HCT116 (cell line): ENCODE measurements at regions of chr19 and their contacts with region 1.

Region 1: DNA sequence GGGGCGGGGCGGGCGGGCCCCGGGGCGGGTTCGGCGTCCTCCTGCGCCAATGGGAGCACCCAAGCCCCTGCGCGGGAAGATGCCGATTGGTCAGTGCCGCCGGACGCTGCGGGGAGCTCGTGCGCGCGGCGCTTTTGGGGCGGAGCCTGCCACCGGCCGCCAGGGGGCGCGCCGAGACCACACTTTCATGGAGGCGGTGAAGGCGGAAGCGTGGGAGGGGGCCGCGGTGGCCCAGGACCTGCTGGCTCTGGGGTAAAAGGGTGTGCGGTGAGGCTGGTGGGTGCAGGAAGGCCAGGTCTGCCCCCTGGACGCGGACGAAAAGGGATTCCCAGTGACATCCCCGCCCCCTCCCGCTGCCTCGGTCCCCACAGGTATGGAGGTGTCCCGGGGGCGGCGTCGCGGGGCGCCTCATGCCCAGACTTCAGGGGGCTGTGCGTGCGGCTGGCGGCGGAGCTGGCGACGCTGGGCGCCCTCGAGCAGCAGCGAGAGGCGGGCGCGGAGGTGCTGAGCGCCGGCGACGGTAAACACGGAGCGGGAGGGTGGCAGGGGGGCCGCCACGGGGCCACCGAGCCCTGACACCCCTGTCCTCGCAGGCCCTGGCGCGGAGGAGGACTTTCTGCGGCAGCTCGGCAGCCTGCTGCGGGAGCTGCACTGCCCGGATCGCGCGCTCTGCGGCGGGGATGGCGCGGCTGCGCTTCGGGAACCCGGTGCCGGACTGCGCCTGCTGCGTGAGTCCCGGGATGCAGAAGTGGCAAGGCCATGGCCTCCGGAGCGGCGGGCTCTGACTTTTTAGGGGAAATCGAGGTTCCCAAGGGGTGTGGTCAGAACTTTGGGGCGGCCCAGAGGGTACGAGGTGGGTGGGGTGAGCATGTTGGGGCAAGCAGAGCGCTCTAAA is at the start of gene FAM98C:
- DNase-seq: peak; percentile 92
- ATAC-seq: peak; percentile 98
- H3K4me3 ChIP-seq: peak within 1 kb of the TSS; percentile 82 to 91
- H3K27ac ChIP-seq: peak within 1 kb of the TSS; percentile 95
- H3K4me1 ChIP-seq: peaks cover 8 to 17% of the 10 kb centered on the region in 2 experiments; a peak in 3 of 4 replicates
- H3K27me3 ChIP-seq: no peaks in the 10 kb centered on the region
- CTCF ChIP-seq: peak; percentile 85 to 90 (median 89)
- POLR2A ChIP-seq: no peak
- RAD21 ChIP-seq: peak; percentile 94
- total RNA-seq, gene FAM98C: 33.8 TPM

Region 2: GRCh38 chr19:38115271-38115802 is 287.9 kb before region 1 on chr19:
- CTCF ChIA-PET with region 1: no interaction called
- POLR2A ChIA-PET with region 1: no interaction called
- RAD21 ChIA-PET with region 1: no interaction called
- intact Hi-C with region 1: no loop called
- DNase-seq: no peak
- ATAC-seq: no peak
- H3K4me3 ChIP-seq: no peak overlapping the region
- H3K27ac ChIP-seq: no peak overlapping the region
- H3K4me1 ChIP-seq: no peaks in the 10 kb centered on the region
- H3K27me3 ChIP-seq: no peaks in the 10 kb centered on the region
- CTCF ChIP-seq: no peak
- POLR2A ChIP-seq: no peak
- RAD21 ChIP-seq: no peak

Region 3: GRCh38 chr19:38374429-38375176 is 28.6 kb before region 1 on chr19 and contains the start of gene PSMD8:
- CTCF ChIA-PET with region 1: interaction called, 9 read pairs
- POLR2A ChIA-PET with region 1: interaction called, 12 read pairs
- RAD21 ChIA-PET with region 1: no interaction called
- intact Hi-C with region 1: no loop called
- DNase-seq: peak; percentile 99
- ATAC-seq: peak; percentile 98
- H3K4me3 ChIP-seq: peak within 1 kb of the TSS; percentile 97 to 98
- H3K27ac ChIP-seq: peak within 1 kb of the TSS; percentile 92
- H3K4me1 ChIP-seq: peaks cover 11 to 23% of the 10 kb centered on the region in 2 experiments
- H3K27me3 ChIP-seq: no peaks in the 10 kb centered on the region
- CTCF ChIP-seq: no peak
- POLR2A ChIP-seq: peak; percentile 92
- RAD21 ChIP-seq: peak; percentile 2; the same call in 1 of the 2 replicates
- total RNA-seq, gene PSMD8: 195 TPM

Region 4: GRCh38 chr19:38417544-38418506 is 14.6 kb after region 1 on chr19:
- CTCF ChIA-PET with region 1: interaction called, 13 read pairs
- POLR2A ChIA-PET with region 1: interaction called, 4 read pairs
- RAD21 ChIA-PET with region 1: interaction called in 1 of 2 experiments, 4 read pairs
- intact Hi-C with region 1: no loop called
- DNase-seq: peak; percentile 66
- ATAC-seq: peak; percentile 93
- H3K4me3 ChIP-seq: peak overlapping the region; percentile 36 to 57
- H3K27ac ChIP-seq: peak overlapping the region; percentile 21
- H3K4me1 ChIP-seq: peaks cover 14 to 16% of the 10 kb centered on the region in 2 experiments; a peak in 3 of 4 replicates
- H3K27me3 ChIP-seq: no peaks in the 10 kb centered on the region
- CTCF ChIP-seq: 0 out of 6 replicates have a peak, but pooled peaks of 1 of the 3 experiments have one; percentile 2
- POLR2A ChIP-seq: peak; percentile 30
- RAD21 ChIP-seq: no peak

Region 5: DNA sequence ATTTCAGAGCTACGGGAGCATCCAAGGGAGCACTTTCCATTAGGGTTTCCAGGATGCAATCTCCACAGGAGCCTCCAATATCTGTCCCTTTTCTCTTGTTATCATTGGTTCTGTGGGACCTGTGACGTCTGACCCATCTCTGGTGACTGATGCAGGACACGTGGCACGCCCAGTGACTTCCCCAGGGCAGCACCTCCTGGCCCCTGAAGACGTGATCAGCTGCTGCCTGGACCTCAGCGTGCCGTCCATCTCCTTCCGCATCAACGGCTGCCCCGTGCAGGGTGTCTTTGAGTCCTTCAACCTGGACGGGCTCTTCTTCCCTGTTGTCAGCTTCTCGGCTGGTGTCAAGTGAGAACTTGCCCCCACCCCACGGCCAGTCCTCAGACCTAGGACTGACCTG is 55.8 kb after region 1 on chr19:
- CTCF ChIA-PET with region 1: no interaction called
- POLR2A ChIA-PET with region 1: no interaction called
- RAD21 ChIA-PET with region 1: no interaction called
- intact Hi-C with region 1: no loop called
- DNase-seq: no peak
- ATAC-seq: no peak
- H3K4me3 ChIP-seq: no peak overlapping the region
- H3K27ac ChIP-seq: no peak overlapping the region
- H3K4me1 ChIP-seq: no peaks in the 10 kb centered on the region
- H3K27me3 ChIP-seq: no peaks in the 10 kb centered on the region
- CTCF ChIP-seq: no peak
- POLR2A ChIP-seq: no peak
- RAD21 ChIP-seq: no peak

Region 6: GRCh38 chr19:38506723-38507550 is 103.7 kb after region 1 on chr19:
- CTCF ChIA-PET with region 1: interaction called, 10 read pairs
- POLR2A ChIA-PET with region 1: no interaction called
- RAD21 ChIA-PET with region 1: no interaction called
- intact Hi-C with region 1: loop called (anchors 10 kb)
- DNase-seq: peak; percentile 95
- ATAC-seq: peak; percentile 90
- H3K4me3 ChIP-seq: peak overlapping the region; percentile 8 to 32; a peak in 3 of 4 replicates
- H3K27ac ChIP-seq: peak overlapping the region; percentile 37; the same call in 1 of the 2 replicates
- H3K4me1 ChIP-seq: peaks cover 9 to 14% of the 10 kb centered on the region in 2 experiments
- H3K27me3 ChIP-seq: no peaks in the 10 kb centered on the region
- CTCF ChIP-seq: no peak
- POLR2A ChIP-seq: peak; percentile 41
- RAD21 ChIP-seq: no peak

Region 7: DNA sequence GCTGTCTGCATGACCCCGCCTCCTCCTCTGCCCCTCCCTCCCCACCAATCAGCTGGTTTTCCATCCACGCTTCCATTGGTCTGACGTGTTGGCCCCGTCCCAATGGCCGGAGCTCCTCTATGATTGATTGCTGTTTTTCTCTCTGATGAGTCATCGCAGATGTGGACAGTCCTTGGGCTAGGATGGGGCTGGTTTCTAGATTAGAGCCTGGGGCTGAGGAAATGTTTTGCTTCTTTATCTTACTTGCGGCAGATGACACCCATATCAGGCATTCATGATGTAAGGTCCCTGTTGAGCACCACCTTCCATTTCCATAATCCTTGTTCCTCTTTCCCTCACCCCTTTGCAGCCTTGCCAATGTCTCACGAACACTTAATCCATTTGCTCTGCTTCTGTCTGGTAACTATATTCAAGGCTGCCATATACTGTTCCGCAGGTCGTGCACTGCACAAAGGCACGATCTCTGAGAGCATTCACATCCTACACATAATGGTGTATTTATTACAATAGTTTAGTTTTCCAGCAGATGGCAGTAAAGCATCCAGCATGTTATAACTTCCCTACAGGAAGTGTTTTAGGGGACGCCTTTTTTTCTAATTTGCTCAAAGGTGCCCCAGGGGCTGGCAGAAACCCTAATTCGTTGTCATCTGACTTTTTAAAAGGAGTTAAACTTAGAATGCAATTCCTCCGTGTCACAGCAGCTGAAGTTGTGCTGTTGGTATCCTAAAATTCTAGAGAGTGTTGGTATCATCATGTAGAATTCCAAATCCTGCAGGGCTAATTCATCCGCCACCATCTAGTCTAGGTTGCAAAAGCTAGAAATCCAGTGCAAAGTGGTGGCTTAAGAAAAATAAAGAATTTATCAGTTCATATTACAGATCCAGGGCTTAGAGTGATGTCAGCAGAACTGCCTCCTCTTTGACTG is 141.1 kb after region 1 on chr19:
- CTCF ChIA-PET with region 1: interaction called, 10 read pairs
- POLR2A ChIA-PET with region 1: no interaction called
- RAD21 ChIA-PET with region 1: no interaction called
- intact Hi-C with region 1: no loop called
- DNase-seq: peak; percentile 87
- ATAC-seq: peak; percentile 89
- H3K4me3 ChIP-seq: peak overlapping the region; percentile 34 to 49
- H3K27ac ChIP-seq: peak overlapping the region; percentile 66
- H3K4me1 ChIP-seq: peaks cover 10 to 21% of the 10 kb centered on the region in 2 experiments
- H3K27me3 ChIP-seq: no peaks in the 10 kb centered on the region
- CTCF ChIP-seq: peak; percentile 57 to 89 (median 80)
- POLR2A ChIP-seq: peak; percentile 40
- RAD21 ChIP-seq: peak; percentile 91

Region 8: GRCh38 chr19:38647368-38647965 is 244.3 kb after region 1 on chr19 and contains the start of gene ACTN4:
- CTCF ChIA-PET with region 1: interaction called, 11 read pairs
- POLR2A ChIA-PET with region 1: no interaction called
- RAD21 ChIA-PET with region 1: interaction called in 1 of 2 experiments, 3 read pairs
- intact Hi-C with region 1: no loop called
- DNase-seq: peak; percentile 92
- ATAC-seq: peak; percentile 80
- H3K4me3 ChIP-seq: peak within 1 kb of the TSS; percentile 84 to 100
- H3K27ac ChIP-seq: peak within 1 kb of the TSS; percentile 72
- H3K4me1 ChIP-seq: peaks cover 39 to 53% of the 10 kb centered on the region in 2 experiments
- H3K27me3 ChIP-seq: no peaks in the 10 kb centered on the region
- CTCF ChIP-seq: no peak
- POLR2A ChIP-seq: peak; percentile 60
- RAD21 ChIP-seq: no peak
- total RNA-seq, gene ACTN4: 651 TPM

Region 9: GRCh38 chr19:38929929-38930775 is 526.9 kb after region 1 on chr19 and contains the start of gene SARS2:
- CTCF ChIA-PET with region 1: interaction called, 32 read pairs
- POLR2A ChIA-PET with region 1: interaction called, 9 read pairs
- RAD21 ChIA-PET with region 1: no interaction called
- intact Hi-C with region 1: loop called (anchors 1 kb)
- DNase-seq: peak; percentile 89
- ATAC-seq: peak; percentile 73
- H3K4me3 ChIP-seq: peak within 1 kb of the TSS; percentile 98 to 100
- H3K27ac ChIP-seq: peak within 1 kb of the TSS; percentile 82
- H3K4me1 ChIP-seq: peaks cover 11 to 20% of the 10 kb centered on the region in 2 experiments; a peak in 3 of 4 replicates
- H3K27me3 ChIP-seq: no peaks in the 10 kb centered on the region
- CTCF ChIP-seq: peak; percentile 98 to 99 (median 99)
- POLR2A ChIP-seq: peak; percentile 70
- RAD21 ChIP-seq: peak; percentile 88
- total RNA-seq, gene SARS2: 58.2 TPM